Calu3 (cell line): ENCODE measurements at regions of chr14 and their contacts with region 1.

Region 1: DNA sequence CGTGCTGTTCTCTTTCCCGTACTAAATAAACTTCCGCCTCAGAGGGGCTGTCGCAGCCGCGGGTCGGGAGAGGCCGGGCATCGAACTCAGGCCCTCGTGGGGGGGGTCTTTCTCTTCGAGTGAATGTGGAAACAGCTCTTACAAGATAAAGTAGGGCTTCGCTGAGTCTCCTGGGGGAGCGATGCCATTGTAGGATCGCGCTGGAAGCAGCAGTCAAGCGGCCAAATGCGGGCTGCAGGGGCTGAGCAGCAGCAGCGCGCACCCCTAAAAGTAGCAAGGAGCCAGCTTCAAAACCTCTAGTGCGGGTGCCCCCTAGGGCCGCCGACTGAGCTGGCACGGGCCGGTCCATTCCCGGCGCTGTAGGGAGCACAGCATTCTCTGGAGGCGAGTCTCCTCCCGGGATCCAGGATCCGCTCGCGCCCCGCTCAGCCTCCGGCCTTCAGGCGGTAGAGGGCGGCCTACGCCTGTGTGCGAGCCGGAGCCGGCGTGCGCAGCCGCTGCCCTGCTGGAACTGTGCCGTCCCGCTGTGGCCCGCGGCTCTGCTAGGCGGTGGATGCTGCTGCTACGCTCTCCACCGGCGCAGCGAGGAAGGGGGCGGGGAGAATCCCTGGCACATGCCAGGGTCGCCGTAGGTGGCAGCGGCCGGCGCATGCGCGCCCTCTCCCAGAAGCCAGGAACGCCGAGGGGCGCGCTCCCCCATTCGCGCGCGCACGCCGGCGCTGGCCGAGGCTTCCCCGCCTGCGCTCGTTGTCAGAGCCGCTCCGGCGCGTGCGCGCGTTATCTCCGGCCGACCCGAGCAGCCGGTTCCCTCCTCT is at the start of gene FUT8:
- DNase-seq: peak; percentile 98
- H3K4me3 Mint-ChIP-seq: peak within 1 kb of the TSS; percentile 79
- H3K27ac Mint-ChIP-seq: peak within 1 kb of the TSS; percentile 78
- H3K4me1 Mint-ChIP-seq: peaks cover 8% of the 10 kb centered on the region
- H3K27me3 Mint-ChIP-seq: no peaks in the 10 kb centered on the region
- CTCF ChIP-seq: peak; percentile 11
- total RNA-seq, gene FUT8: 85.7 and 129 TPM in 2 replicates

Region 2: GRCh38 chr14:65164068-65164824 is 248.0 kb before region 1 on chr14:
- CTCF ChIA-PET with region 1: interaction called, 13 read pairs
- intact Hi-C with region 1: loop called (anchors 2 kb)
- DNase-seq: peak; percentile 55
- H3K4me3 Mint-ChIP-seq: no peak overlapping the region
- H3K27ac Mint-ChIP-seq: no peak overlapping the region
- H3K4me1 Mint-ChIP-seq: peaks cover 19% of the 10 kb centered on the region
- H3K27me3 Mint-ChIP-seq: no peaks in the 10 kb centered on the region
- CTCF ChIP-seq: peak; percentile 46

Region 3: DNA sequence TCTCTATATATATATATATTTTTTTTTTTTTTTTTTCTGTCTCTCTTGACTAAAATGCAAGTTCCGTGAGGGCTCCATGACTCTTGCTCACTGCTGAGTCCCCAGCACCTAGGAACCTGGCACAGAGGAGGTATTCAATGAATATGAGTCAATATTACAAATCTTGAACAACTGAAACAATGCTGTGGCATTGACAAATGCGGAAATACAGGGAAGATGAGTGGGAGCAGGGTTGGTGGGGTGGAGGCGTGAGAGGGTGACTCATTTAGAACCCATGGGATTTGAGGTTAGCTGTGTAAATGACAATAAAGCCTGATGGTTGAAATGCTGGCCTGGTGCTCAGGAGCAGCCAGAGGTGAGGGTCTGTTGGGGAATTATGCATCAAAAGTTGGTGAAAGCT is 121.4 kb before region 1 on chr14:
- CTCF ChIA-PET with region 1: interaction called, 5 read pairs
- intact Hi-C with region 1: loop called (anchors 2 kb)
- DNase-seq: peak; percentile 85
- H3K4me3 Mint-ChIP-seq: peak overlapping the region; percentile 5
- H3K27ac Mint-ChIP-seq: peak overlapping the region; percentile 86
- H3K4me1 Mint-ChIP-seq: peaks cover 37% of the 10 kb centered on the region
- H3K27me3 Mint-ChIP-seq: no peaks in the 10 kb centered on the region
- CTCF ChIP-seq: no peak

Region 4: GRCh38 chr14:65604936-65605335 is 192.7 kb after region 1 on chr14:
- CTCF ChIA-PET with region 1: no interaction called
- intact Hi-C with region 1: loop called (anchors 5 kb)
- DNase-seq: no peak
- H3K4me3 Mint-ChIP-seq: no peak overlapping the region
- H3K27ac Mint-ChIP-seq: no peak overlapping the region
- H3K4me1 Mint-ChIP-seq: peaks cover 6% of the 10 kb centered on the region
- H3K27me3 Mint-ChIP-seq: no peaks in the 10 kb centered on the region
- CTCF ChIP-seq: no peak

Region 5: GRCh38 chr14:65832431-65833266 is 420.4 kb after region 1 on chr14:
- CTCF ChIA-PET with region 1: interaction called, 13 read pairs
- intact Hi-C with region 1: no loop called
- DNase-seq: no peak
- H3K4me3 Mint-ChIP-seq: no peak overlapping the region
- H3K27ac Mint-ChIP-seq: no peak overlapping the region
- H3K4me1 Mint-ChIP-seq: peaks cover 7% of the 10 kb centered on the region
- H3K27me3 Mint-ChIP-seq: peaks cover 50% of the 10 kb centered on the region
- CTCF ChIP-seq: no peak

Region 6: GRCh38 chr14:66070509-66071319 is 658.5 kb after region 1 on chr14:
- CTCF ChIA-PET with region 1: interaction called, 3 read pairs
- intact Hi-C with region 1: loop called (anchors 5 kb)
- DNase-seq: peak; percentile 76
- H3K4me3 Mint-ChIP-seq: no peak overlapping the region
- H3K27ac Mint-ChIP-seq: no peak overlapping the region
- H3K4me1 Mint-ChIP-seq: no peaks in the 10 kb centered on the region
- H3K27me3 Mint-ChIP-seq: peaks cover 43% of the 10 kb centered on the region
- CTCF ChIP-seq: peak; percentile 81